H1 (cell line): ENCODE measurements at regions of chr10 and their contacts with region 1.

Region 1: DNA sequence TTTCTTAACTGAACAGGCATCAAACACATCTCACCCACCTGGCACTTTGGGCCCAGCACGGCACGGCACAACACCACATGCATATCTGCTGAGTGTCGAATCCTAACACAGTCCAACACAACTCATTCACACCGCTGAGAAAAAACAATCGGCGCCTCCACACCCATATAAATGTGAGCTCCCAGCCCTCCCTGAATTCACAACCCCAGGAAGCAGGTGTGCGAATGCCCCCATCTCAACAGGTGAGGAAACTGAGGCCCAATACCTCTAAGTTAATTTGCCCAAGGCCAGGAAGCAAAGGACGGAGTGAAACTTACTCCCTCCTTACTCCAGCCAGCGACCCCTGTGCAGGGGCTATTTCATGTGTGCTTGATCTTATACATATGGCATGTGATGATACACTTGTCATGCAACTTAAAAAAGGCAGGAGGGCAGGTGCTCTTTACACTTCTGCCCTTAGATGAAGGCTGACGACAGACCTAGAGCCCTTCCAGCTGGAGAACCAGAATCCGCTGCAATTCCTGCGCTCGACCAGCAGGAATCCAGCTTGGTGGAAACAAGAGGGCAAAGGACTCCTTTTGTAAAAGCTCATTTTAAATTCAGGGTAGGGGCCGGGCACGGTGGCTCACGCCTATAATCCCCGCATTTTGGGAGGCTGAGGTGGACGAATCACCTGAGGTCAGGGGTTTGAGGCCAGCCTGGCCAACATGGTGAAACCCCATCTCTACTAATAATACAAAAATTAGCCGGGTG is 116.0 kb downstream of the LARP4B start:
- DNase-seq: no peak
- H3K4me3 ChIP-seq: no peak overlapping the region
- H3K27ac ChIP-seq: no peak overlapping the region
- H3K4me1 ChIP-seq: no peaks in the 10 kb centered on the region; a peak in 1 of 7 replicates
- H3K27me3 ChIP-seq: no peaks in the 10 kb centered on the region
- CTCF ChIP-seq: peak; percentile 17 to 40 (median 21); a peak in 2 of 4 replicates
- EP300 ChIP-seq: no peak
- POLR2A ChIP-seq: no peak; a peak in 1 of 3 replicates
- RAD21 ChIP-seq: no peak; a peak in 1 of 4 replicates

Region 2: DNA sequence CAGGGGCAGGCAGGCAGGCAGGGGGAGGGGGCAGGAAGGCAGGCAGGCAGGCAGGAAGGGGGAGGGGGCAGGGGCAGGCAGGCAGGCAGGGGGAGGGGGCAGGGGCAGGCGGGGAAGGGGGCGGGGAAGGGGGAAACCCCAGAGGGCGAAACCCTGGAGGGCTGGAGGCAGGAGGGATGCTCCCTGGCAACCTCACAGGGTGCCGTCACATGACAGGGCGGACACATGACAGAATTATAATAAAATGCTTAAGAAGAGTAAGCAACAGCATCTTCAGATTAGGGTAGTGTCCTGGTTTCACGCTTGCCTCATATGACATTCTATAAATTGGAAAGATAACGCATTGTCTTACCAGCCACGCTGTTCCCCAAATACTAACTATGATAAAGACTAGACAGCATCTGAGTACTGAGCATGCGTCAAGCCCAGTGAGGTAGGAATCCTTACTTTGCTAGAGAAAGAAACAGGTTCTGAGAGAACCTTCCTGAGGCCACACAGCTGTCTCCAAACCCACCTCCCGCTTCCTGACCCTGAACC is 257.7 kb before region 1 on chr10:
- CTCF ChIA-PET with region 1: no interaction called
- POLR2A ChIA-PET with region 1: no interaction called
- DNase-seq: no peak
- H3K4me3 ChIP-seq: no peak overlapping the region
- H3K27ac ChIP-seq: no peak overlapping the region
- H3K4me1 ChIP-seq: peaks cover 5 to 18% (median 13%) of the 10 kb centered on the region in 4 experiments; a peak in 6 of 7 replicates
- H3K27me3 ChIP-seq: no peaks in the 10 kb centered on the region
- CTCF ChIP-seq: no peak
- EP300 ChIP-seq: no peak
- POLR2A ChIP-seq: no peak
- RAD21 ChIP-seq: no peak

Region 3: DNA sequence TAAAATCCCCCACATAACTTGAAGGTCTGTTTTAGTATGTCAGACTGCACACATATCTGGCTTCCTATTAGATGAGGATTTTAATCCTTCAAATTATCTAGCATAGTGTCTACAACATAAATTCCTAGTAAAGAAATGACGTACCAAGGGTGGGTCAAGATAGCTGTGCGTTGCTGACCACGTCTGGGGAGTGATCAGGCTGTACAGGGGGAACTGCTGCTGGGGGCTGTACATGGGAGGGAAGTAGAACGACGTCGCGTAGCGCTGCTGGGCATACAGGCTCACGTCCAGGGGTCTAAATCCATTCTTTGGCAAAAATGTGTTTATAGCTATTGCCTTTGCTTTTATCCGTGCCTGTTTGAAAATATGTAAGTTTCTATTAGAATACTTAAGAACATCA is 13.7 kb after region 1 on chr10:
- CTCF ChIA-PET with region 1: interaction called, 22 read pairs
- POLR2A ChIA-PET with region 1: interaction called, 4 read pairs
- DNase-seq: no peak
- H3K4me3 ChIP-seq: no peak overlapping the region
- H3K27ac ChIP-seq: no peak overlapping the region
- H3K4me1 ChIP-seq: no peaks in the 10 kb centered on the region
- H3K27me3 ChIP-seq: no peaks in the 10 kb centered on the region
- CTCF ChIP-seq: no peak
- EP300 ChIP-seq: no peak
- POLR2A ChIP-seq: no peak
- RAD21 ChIP-seq: no peak